Activated naive CD4-positive, alpha-beta T cell treated with anti-CD3 and anti-CD28 coated beads for 36 hours (primary cell): ENCODE measurements at regions of chr22 and their contacts with region 1.

Region 1: DNA sequence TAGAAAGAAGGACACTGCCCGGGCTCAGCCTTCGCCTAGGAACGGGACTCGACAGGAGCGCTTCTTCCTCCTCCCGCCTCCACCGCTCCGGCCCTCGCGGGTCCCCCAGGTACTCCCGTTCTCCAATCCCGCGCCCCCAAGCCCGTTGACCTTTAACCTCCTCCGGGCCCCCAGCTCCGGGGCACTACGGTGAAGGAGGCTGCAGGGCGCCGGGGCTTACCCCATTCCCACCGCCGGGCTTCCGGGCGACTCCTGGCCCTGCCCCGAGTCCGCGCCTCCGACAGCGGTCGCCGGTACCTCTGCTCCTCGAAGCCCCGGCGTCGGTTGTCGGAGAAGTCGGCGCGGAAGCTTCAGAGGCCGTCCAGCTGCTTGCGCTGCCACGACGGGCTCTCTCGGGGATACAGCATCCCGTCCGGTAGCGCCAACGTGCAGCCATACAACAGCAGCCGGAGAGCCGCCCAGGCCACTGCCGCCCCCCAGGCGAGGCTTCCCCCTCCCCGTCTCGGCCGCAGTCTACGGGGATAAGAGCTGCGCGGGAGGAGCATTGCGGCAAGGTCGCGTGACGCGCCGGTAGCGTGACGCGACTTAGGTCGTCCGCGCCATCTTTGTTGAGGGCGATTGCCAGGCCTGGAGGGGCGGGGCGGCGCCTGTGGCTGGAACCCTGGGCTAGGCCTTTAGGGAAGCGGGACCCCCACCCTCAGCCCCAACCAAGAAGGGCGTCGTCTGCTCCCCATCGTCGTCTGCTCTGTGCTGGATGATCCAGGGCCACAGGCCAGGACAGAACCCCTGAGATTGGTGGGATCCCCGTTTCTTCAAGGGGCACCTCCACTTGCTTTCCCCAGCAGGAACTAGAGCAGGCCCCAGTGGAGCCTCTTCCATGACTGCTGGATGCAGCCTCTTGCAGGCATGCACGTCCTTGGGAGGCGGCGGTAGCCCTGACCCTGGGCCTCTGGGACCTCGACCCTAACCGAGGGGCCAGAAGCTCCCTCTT is 26.3 kb downstream of the RGL4 start:
- DNase-seq: peak; percentile 82
- H3K4me3 Mint-ChIP-seq: peak overlapping the region; percentile 76
- H3K27ac Mint-ChIP-seq: peak overlapping the region; percentile 65
- H3K4me1 Mint-ChIP-seq: peaks cover 18% of the 10 kb centered on the region
- H3K27me3 Mint-ChIP-seq: no peaks in the 10 kb centered on the region

Region 2: GRCh38 chr22:23655891-23656475 is 61.1 kb before region 1 on chr22:
- CTCF ChIA-PET with region 1: no interaction called
- intact Hi-C with region 1: no loop called
- DNase-seq: no peak
- H3K4me3 Mint-ChIP-seq: no peak overlapping the region
- H3K27ac Mint-ChIP-seq: no peak overlapping the region
- H3K4me1 Mint-ChIP-seq: no peaks in the 10 kb centered on the region
- H3K27me3 Mint-ChIP-seq: no peaks in the 10 kb centered on the region

Region 3: DNA sequence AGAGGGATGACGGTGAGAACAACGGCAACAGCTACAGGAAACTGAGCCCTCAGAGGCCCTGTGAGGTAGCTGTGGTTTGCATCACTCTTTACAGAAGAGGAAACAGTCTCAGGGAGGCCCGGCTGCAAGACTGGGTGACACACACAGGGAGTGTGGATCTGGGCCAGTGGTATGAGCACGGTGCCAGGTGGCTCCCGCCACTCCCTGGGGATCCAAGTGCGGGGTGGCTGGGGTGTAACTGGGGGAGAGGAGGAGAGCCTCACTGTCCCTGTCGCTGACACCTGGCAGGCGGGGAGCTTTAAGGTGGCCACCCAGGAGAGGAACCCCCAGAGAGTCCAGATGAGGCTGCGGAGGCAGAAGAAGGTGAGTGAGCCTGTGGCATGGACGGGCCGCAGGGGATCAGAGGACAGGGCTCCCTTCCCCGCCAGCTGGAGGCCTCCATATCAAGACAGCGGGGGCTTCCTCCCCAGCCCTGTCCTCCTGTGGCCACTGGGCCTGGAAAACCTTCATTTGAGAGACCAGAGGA is 20.7 kb before region 1 on chr22:
- CTCF ChIA-PET with region 1: interaction called, 3 read pairs
- intact Hi-C with region 1: loop called (anchors 1 kb)
- DNase-seq: peak; percentile 94
- H3K4me3 Mint-ChIP-seq: peak overlapping the region; percentile 93
- H3K27ac Mint-ChIP-seq: peak overlapping the region; percentile 100
- H3K4me1 Mint-ChIP-seq: peaks cover 46% of the 10 kb centered on the region
- H3K27me3 Mint-ChIP-seq: no peaks in the 10 kb centered on the region

Region 4: DNA sequence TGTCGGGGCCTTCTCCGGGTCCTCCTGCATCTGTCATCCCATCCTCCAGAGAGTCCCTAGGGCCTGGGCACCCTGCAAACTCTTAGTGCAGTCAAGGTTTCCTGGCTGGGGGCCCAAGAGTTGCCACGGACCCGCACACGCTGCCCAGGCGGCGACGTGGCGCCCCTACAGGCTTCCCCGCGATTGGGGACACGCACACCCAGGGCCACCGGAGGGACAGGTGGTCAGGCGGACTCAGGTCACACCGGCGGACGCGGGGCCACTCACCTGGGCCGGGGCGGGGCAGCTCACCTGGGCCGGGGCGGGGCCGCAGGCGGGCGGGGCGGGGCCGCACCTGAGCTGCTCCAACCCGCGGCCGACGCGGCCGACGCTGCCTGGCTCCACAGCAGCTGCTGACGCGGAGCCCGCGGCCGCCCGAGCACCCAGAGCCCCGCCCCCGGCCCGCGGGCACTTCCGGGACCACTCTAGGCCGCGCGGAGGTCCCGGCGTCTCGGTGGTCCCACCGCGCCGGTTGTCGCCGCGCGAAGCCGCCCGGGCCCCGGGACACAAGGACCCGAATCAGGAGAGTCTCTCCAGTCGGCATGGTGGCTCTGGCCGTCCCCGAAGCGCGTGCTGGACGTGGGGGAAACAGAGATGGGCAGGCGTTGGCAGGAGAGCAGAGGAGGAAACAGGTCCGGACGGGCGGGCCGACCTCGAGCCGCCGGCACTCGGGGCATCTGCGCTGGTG is 33.8 kb after region 1 on chr22 and contains the start of gene ZNF70:
- CTCF ChIA-PET with region 1: no interaction called
- intact Hi-C with region 1: loop called (anchors 2 kb)
- DNase-seq: peak; percentile 81
- H3K4me3 Mint-ChIP-seq: peak within 1 kb of the TSS; percentile 75
- H3K27ac Mint-ChIP-seq: no peak within 1 kb of the TSS
- H3K4me1 Mint-ChIP-seq: peaks cover 11% of the 10 kb centered on the region
- H3K27me3 Mint-ChIP-seq: no peaks in the 10 kb centered on the region
- total RNA-seq, gene ZNF70: 0.79 to 0.93 TPM

Region 5: GRCh38 chr22:23786752-23787599 is 69.9 kb after region 1 on chr22 and contains the start of gene SMARCB1:
- CTCF ChIA-PET with region 1: no interaction called
- intact Hi-C with region 1: no loop called
- DNase-seq: peak; percentile 89
- H3K4me3 Mint-ChIP-seq: peak within 1 kb of the TSS; percentile 89
- H3K27ac Mint-ChIP-seq: peak within 1 kb of the TSS; percentile 95
- H3K4me1 Mint-ChIP-seq: peaks cover 34% of the 10 kb centered on the region
- H3K27me3 Mint-ChIP-seq: no peaks in the 10 kb centered on the region
- total RNA-seq, gene SMARCB1: 75.3 to 89.1 TPM